Gastrocnemius medialis (tissue), 4 donors: ENCODE measurements at regions of chr3 and their contacts with region 1.

Region 1: DNA sequence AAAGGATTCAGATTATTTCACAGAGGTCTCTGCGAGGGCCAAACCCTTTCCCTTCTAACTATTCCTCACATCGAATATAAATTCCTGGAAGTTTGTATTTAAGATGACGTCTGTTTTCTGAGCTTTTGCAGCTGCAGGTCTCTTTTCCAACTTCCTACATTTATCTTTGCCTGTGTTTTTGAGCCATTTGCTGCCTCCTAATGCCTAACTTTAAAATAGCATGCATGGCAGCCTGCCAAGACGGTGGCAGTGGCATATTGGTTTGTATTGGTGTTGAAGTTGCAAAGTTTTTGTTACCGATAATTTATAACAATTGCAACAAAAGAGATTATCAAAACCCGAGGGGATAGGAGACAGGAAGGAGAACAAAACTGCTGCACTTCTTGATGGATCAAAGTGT is 187.1 kb upstream of the DNAJC19 start:
- DNase-seq: peak; percentile 13 to 32
- ATAC-seq: no peak
- H3K4me3 ChIP-seq: no peak overlapping the region
- H3K27ac ChIP-seq: no peak overlapping the region
- H3K4me1 ChIP-seq: no peaks in the 10 kb centered on the region
- H3K27me3 ChIP-seq: no peaks in the 10 kb centered on the region
- CTCF ChIP-seq: peak; percentile 15 to 59 (median 42)
- POLR2A ChIP-seq: no peak

Region 2: GRCh38 chr3:180789774-180790173 is 386.8 kb before region 1 on chr3:
- in situ Hi-C with region 1: loop called in 1 of 4 experiments (anchors 10 kb)
- intact Hi-C with region 1: no loop called
- DNase-seq: no peak
- ATAC-seq: no peak
- H3K4me3 ChIP-seq: no peak overlapping the region
- H3K27ac ChIP-seq: no peak overlapping the region
- H3K4me1 ChIP-seq: no peaks in the 10 kb centered on the region
- H3K27me3 ChIP-seq: no peaks in the 10 kb centered on the region
- CTCF ChIP-seq: no peak
- POLR2A ChIP-seq: no peak